GM12878 (cell line): ENCODE measurements at regions of chr10 and their contacts with region 1.

Region 1: DNA sequence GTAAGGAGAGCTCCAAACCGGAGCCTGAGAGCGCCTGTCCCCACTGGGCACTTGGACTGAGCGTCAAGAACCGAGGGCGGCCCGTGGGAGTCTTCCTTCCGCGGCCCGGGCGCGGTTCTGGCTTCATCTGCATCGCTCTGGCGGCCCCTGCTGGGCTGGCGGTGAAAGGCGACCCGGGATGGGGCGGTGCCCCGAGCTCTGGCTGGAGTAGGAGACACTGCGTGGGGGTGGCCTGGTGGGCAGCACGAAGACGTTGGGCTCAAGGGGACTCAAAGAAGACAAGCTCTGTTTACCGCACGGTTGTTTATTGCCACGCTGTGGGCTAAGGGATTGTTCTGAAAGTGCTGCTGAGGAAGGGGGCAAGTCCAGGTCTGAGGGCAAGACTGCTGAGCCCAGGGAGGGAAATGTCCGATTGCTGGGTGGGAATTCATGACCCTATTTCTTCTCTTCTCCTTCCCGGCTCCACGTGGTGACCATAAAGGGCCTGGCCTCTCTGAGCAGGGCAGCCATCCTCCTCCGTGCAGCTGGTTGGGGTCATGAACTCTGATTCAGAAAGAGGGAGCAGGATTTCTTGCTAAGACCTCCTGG is 29.8 kb downstream of the PLAU start:
- DNase-seq: no peak
- ATAC-seq: peak; percentile 100
- H3K4me3 ChIP-seq: no peak overlapping the region
- H3K27ac ChIP-seq: no peak overlapping the region
- H3K4me1 ChIP-seq: no peaks in the 10 kb centered on the region
- H3K27me3 ChIP-seq: no peaks in the 10 kb centered on the region
- CTCF ChIP-seq: peak; percentile 92 to 99 (median 97)
- EP300 ChIP-seq: no peak
- POLR2A ChIP-seq: no peak
- RAD21 ChIP-seq: peak; percentile 98

Region 2: GRCh38 chr10:73874267-73875138 is 66.2 kb before region 1 on chr10 and contains the start of gene CAMK2G:
- CTCF ChIA-PET with region 1: interaction called, 930 read pairs
- POLR2A ChIA-PET with region 1: interaction called, 5 read pairs
- RAD21 ChIA-PET with region 1: interaction called, 616 read pairs
- SMC1A ChIA-PET with region 1: interaction called, 1,048 read pairs
- in situ Hi-C with region 1: no loop called
- intact Hi-C with region 1: no loop called
- DNase-seq: no peak
- ATAC-seq: peak; percentile 88
- H3K4me3 ChIP-seq: peak within 1 kb of the TSS; percentile 84
- H3K27ac ChIP-seq: peak within 1 kb of the TSS; percentile 58
- H3K4me1 ChIP-seq: peaks cover 16% of the 10 kb centered on the region
- H3K27me3 ChIP-seq: no peaks in the 10 kb centered on the region
- CTCF ChIP-seq: no peak
- EP300 ChIP-seq: no peak
- POLR2A ChIP-seq: peak; percentile 89
- RAD21 ChIP-seq: no peak
- polyA plus RNA-seq, gene CAMK2G: 5.5 to 6.9 TPM

Region 3: DNA sequence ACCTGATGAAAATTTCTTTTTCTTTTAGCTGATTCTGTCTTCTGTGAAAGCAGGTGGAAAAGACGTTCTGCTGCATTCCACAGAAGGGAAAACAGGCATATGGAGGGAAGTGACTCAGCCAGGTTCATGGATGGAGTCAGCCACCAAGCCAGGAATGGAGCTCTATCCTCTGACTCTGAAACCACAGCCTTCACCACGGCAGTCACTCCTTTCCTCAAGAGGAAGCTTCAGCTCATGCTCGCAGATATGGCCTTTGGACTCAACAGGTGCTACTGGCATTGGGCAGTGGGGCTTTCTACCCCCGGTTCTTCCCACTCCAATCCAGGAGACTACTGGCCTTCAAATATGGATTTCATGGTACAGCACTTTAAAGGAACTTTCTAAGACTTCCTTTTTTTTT is 41.3 kb before region 1 on chr10:
- CTCF ChIA-PET with region 1: interaction called, 930 read pairs
- POLR2A ChIA-PET with region 1: interaction called, 5 read pairs
- RAD21 ChIA-PET with region 1: interaction called, 616 read pairs
- SMC1A ChIA-PET with region 1: interaction called, 1,048 read pairs
- in situ Hi-C with region 1: loop called (anchors 5 kb)
- intact Hi-C with region 1: no loop called
- DNase-seq: no peak
- ATAC-seq: no peak
- H3K4me3 ChIP-seq: no peak overlapping the region
- H3K27ac ChIP-seq: no peak overlapping the region
- H3K4me1 ChIP-seq: no peaks in the 10 kb centered on the region
- H3K27me3 ChIP-seq: no peaks in the 10 kb centered on the region; a peak in 1 of 4 replicates
- CTCF ChIP-seq: no peak
- EP300 ChIP-seq: no peak
- POLR2A ChIP-seq: no peak
- RAD21 ChIP-seq: no peak

Region 4: GRCh38 chr10:73926152-73926764 is 14.5 kb before region 1 on chr10:
- CTCF ChIA-PET with region 1: interaction called, 35 read pairs
- POLR2A ChIA-PET with region 1: no interaction called
- RAD21 ChIA-PET with region 1: interaction called, 7 read pairs
- SMC1A ChIA-PET with region 1: interaction called, 4 read pairs
- in situ Hi-C with region 1: no loop called
- intact Hi-C with region 1: no loop called
- DNase-seq: no peak
- ATAC-seq: no peak
- H3K4me3 ChIP-seq: no peak overlapping the region
- H3K27ac ChIP-seq: no peak overlapping the region
- H3K4me1 ChIP-seq: peaks cover 3% of the 10 kb centered on the region; the same call in 1 of the 2 replicates
- H3K27me3 ChIP-seq: peaks cover 0 to 6% of the 10 kb centered on the region in 2 experiments; a peak in 2 of 4 replicates
- CTCF ChIP-seq: no peak
- EP300 ChIP-seq: no peak
- POLR2A ChIP-seq: no peak
- RAD21 ChIP-seq: no peak

Region 5: DNA sequence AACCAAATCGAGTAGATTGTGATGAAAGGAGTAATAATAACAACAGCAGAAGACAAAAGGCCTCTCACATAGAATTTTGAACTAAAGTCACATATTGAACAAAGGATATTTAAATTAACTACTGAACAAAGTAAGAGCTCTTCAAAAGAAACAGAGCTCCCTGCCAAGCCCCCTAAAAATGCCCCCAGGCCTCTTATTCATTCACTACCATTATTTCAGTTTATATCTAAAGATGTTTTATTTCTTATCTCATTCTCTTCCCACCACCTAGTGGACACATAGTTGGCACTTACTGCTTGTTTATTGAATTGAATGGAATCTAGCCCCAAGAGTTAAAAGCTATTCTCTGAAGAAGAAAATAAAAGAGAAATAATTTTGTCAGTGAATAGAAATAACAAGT is 94.6 kb after region 1 on chr10:
- CTCF ChIA-PET with region 1: interaction called, 5 read pairs
- POLR2A ChIA-PET with region 1: no interaction called
- RAD21 ChIA-PET with region 1: interaction called, 8 read pairs
- SMC1A ChIA-PET with region 1: interaction called, 16 read pairs
- in situ Hi-C with region 1: no loop called
- intact Hi-C with region 1: no loop called
- DNase-seq: no peak
- ATAC-seq: no peak
- H3K4me3 ChIP-seq: no peak overlapping the region
- H3K27ac ChIP-seq: no peak overlapping the region
- H3K4me1 ChIP-seq: peaks cover 11% of the 10 kb centered on the region
- H3K27me3 ChIP-seq: no peaks in the 10 kb centered on the region
- CTCF ChIP-seq: peak in 1 of 3 experiments; percentile 14; a peak in 2 of 6 replicates
- EP300 ChIP-seq: no peak
- POLR2A ChIP-seq: no peak
- RAD21 ChIP-seq: peak; percentile 46; the same call in 1 of the 2 replicates

Region 6: GRCh38 chr10:74103560-74104248 is 163.0 kb after region 1 on chr10:
- CTCF ChIA-PET with region 1: interaction called, 73 read pairs
- POLR2A ChIA-PET with region 1: no interaction called
- RAD21 ChIA-PET with region 1: interaction called, 22 read pairs
- SMC1A ChIA-PET with region 1: interaction called, 14 read pairs
- in situ Hi-C with region 1: no loop called
- intact Hi-C with region 1: no loop called
- DNase-seq: no peak
- ATAC-seq: peak; percentile 85
- H3K4me3 ChIP-seq: no peak overlapping the region
- H3K27ac ChIP-seq: no peak overlapping the region
- H3K4me1 ChIP-seq: no peaks in the 10 kb centered on the region
- H3K27me3 ChIP-seq: no peaks in the 10 kb centered on the region
- CTCF ChIP-seq: peak; percentile 52 to 71 (median 67)
- EP300 ChIP-seq: no peak
- POLR2A ChIP-seq: no peak
- RAD21 ChIP-seq: peak; percentile 84